ENCODE measurements at regions of chr9 and their contacts with region 1.

Region 1: DNA sequence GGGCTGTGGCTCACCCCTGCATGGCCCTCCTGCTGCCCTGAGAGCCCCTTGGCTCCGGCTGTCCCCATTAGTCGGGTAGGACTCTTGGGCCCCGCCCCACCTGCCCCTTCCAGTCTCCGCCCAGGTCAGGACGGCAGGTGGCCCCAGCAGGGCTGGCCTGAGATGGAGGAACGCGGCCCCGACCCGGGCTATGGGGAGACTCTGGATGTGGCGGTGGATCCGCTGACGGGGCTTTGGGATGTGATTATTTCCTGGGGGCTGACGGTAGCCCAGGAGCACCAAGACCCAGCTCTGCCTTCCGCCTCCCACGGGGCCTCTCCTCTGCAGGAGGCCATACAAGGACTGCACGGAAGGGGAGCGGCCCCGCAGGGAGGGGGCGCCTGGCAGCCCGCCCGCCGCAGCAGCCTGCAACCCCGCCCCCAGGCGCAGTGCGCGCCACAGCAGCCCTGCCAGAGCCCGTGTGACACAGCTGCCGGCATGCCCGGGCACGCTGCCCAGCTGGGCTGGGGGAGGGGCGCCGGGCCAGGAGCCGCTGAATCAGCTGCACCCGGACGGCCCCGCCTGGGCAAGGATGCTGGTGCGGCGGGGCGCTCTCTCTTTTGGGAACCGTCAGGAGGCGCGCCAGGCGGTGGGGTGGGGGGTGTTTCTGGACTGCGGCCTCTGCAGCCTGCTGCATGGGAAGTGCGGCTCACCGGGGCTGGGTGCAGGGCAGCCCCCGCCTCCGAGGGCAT is 9.2 kb downstream of the TMEM250 start:
- DNase-seq: peak; percentile 86
- H3K4me3 ChIP-seq: peak overlapping the region; percentile 11 to 22
- H3K27ac ChIP-seq: peak overlapping the region; percentile 59 to 67
- H3K4me1 ChIP-seq: peaks cover 10% of the 10 kb centered on the region
- H3K27me3 ChIP-seq: no peaks in the 10 kb centered on the region
- CTCF ChIP-seq: peak in 2 of 4 experiments; percentile 16
- POLR2A ChIP-seq: no peak

Region 2: DNA sequence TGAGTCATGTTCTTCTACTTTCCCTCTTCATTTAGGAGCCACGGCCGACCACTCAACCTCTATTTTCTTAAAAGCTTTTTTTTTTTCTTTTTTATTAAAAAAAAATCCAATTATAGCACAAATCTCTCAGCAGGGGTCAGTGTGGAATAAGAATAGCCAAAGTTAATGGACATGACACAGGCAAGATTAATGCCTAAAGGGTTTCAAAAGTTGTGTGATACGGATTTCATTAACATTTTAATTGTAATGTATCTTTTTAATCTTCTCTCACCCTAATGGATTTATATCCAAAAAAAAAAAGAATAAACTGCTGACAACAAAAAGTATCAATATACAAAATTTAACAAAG is 19.8 kb before region 1 on chr9:
- intact Hi-C with region 1: loop called (anchors 2 kb)
- DNase-seq: no peak
- H3K4me3 ChIP-seq: no peak overlapping the region
- H3K27ac ChIP-seq: peak overlapping the region; percentile 62 to 66
- H3K4me1 ChIP-seq: peaks cover 8% of the 10 kb centered on the region
- H3K27me3 ChIP-seq: no peaks in the 10 kb centered on the region
- CTCF ChIP-seq: peak in 2 of 4 experiments; percentile 24 to 49
- POLR2A ChIP-seq: no peak

Region 3: DNA sequence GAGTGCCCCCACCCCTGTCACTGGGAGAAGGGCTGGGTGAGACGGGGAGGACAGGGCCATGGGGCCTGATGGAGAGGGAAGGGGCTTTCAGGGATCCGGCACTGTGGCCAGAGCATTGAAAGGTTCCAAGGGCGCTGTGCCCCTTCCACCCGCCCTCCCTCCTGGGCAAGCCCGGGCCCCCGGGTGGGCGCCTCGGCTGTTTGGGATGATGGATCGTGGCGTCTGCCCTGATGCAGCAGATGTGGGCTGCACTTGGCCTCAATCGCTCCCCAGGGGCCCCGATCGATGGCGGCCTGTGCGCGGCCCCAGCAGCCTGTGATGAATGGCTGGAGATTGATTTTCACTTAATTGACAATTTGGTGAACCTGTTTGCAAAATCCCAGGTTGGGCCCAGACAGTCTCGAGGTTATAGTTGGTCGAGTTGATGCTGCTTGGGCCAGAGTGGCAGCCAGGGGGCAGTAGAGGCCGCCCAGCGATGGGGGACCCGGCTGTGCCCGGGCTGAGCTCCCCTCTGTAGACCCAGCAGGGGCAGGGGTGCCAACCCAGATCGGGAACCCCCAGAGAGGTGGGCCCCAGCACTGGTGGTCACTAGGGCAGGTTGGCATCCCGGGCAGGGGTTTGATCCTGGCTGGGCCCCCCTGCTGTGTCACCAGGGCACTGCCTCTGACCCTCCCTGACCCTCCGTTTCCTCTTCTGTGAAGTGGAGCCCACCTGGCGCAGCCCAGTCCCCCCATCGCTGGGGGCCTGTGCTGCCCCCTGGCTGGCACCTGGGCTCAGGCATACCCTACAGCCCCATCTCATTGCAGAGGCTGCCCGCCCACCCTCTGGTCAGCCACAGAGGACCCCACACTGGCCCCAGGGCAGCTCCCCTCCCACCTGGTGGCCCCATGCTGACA is 60.7 kb after region 1 on chr9:
- intact Hi-C with region 1: no loop called
- DNase-seq: peak; percentile 11
- H3K4me3 ChIP-seq: no peak overlapping the region
- H3K27ac ChIP-seq: no peak overlapping the region
- H3K4me1 ChIP-seq: no peaks in the 10 kb centered on the region
- H3K27me3 ChIP-seq: no peaks in the 10 kb centered on the region
- CTCF ChIP-seq: peak in 3 of 4 experiments; percentile 57 to 68 (median 60)
- POLR2A ChIP-seq: no peak

Region 4: DNA sequence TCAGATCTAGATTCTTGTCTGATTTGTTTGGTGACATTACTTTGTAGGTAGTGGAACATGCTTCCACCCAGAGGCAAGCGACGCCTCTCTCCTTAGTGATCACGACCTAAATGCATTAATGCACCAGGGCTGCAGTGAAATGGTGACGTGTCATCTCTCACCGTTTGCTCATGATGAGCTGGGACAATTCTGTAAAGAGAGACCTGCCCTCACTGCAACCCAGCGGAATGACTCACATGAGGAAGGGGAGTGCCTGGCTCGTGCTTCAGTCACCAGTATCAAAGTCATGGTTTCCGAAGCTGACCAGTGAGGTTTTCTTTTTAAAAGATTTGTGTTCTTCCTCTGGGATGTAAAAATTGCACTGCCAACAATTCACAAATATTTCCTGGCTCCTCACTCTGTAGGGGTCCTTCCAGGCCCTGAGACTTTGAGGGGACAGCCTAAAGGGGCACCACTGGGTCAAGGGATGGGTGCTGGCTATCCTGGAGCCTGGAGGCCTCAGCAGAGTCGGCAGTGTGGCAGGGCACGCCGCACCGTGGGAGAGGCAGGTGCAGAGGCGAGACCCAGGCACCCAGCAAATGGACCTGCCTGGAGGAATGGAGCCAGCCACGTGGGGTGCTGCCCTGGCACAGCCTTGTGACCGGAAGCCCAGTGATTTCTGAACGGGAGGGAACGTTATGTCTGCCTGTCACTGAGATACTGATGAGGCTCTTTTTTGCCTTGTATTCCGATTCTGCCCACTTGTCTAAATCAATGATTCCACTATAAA is 118.8 kb after region 1 on chr9:
- intact Hi-C with region 1: no loop called
- DNase-seq: no peak
- H3K4me3 ChIP-seq: no peak overlapping the region
- H3K27ac ChIP-seq: no peak overlapping the region
- H3K4me1 ChIP-seq: no peaks in the 10 kb centered on the region
- H3K27me3 ChIP-seq: no peaks in the 10 kb centered on the region
- CTCF ChIP-seq: no peak
- POLR2A ChIP-seq: no peak